ENCODE measurements at regions of chr13 and their contacts with region 1.

Region 1: GRCh38 chr13:99403458-99403971 is 96.3 kb upstream of the GPR183 start:
- DNase-seq: no peak
- H3K4me3 Mint-ChIP-seq: no peak overlapping the region
- H3K27ac Mint-ChIP-seq: peak overlapping the region; percentile 61
- H3K4me1 Mint-ChIP-seq: peaks cover 25% of the 10 kb centered on the region
- H3K27me3 Mint-ChIP-seq: peaks cover 8% of the 10 kb centered on the region

Region 2: GRCh38 chr13:99386911-99387788 is 16.4 kb before region 1 on chr13:
- intact Hi-C with region 1: no loop called
- DNase-seq: peak; percentile 62
- H3K4me3 Mint-ChIP-seq: no peak overlapping the region
- H3K27ac Mint-ChIP-seq: peak overlapping the region; percentile 64
- H3K4me1 Mint-ChIP-seq: peaks cover 39% of the 10 kb centered on the region
- H3K27me3 Mint-ChIP-seq: no peaks in the 10 kb centered on the region

Region 3: GRCh38 chr13:99417201-99418102 is 13.9 kb after region 1 on chr13:
- intact Hi-C with region 1: loop called (anchors 2 kb)
- DNase-seq: no peak
- H3K4me3 Mint-ChIP-seq: no peak overlapping the region
- H3K27ac Mint-ChIP-seq: no peak overlapping the region
- H3K4me1 Mint-ChIP-seq: peaks cover 46% of the 10 kb centered on the region
- H3K27me3 Mint-ChIP-seq: peaks cover 7% of the 10 kb centered on the region